ENCODE measurements at regions of chr7 and their contacts with region 1.

Region 1: GRCh38 chr7:155763691-155764437 is 48.4 kb downstream of the SHH start:
- DNase-seq: peak; percentile 91
- H3K4me3 Mint-ChIP-seq: peak overlapping the region; percentile 83
- H3K27ac Mint-ChIP-seq: peak overlapping the region; percentile 99
- H3K4me1 Mint-ChIP-seq: peaks cover 67% of the 10 kb centered on the region
- H3K27me3 Mint-ChIP-seq: no peaks in the 10 kb centered on the region

Region 2: DNA sequence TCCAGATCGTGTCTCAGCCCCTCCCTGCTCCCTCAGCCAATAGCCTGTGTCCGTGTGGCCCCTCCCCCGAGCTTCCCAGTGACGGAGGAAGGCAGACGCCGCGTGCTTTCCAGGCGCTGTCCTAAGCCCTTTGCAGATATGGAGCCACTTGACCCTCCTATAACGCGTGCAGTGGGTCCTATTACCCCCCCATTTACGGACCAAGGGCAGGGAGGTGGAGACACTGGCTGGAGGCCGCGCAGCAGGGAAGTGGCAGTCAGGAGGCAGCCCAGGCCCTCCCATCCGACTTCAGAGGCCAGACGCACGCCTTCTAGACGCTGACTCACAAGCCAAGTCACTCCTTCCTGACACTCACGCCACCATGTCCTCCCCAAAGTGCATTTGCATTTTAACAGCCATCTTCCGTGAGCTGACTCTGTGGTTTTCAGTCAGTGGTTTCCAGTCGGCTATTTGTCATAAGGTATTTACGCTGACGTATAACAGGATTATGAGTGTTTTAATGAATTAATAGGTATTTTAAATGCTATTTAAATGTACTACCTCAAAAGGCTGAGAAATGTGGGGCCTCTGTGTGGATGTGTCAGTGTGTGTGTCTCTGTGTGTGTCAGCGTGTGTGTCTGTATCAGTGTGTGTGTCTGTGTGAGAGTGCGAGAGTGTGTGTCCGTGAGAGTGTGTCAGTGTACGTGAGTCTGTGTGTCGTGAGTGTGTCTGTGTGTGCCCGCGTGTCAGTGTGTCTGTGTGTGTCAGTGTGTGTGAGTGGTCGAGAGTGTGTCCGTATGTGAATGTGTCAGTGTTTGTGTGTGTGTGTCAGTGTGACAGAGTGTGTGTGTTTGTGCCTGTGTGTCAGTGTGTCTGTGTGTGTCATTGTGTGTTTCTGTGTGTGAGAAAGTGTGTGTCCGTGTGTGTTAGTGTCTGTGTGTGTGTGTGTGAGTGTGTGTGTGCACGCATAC is 558.2 kb before region 1 on chr7:
- intact Hi-C with region 1: loop called (anchors 5 kb)
- DNase-seq: peak; percentile 96
- H3K4me3 Mint-ChIP-seq: peak overlapping the region; percentile 85
- H3K27ac Mint-ChIP-seq: peak overlapping the region; percentile 96
- H3K4me1 Mint-ChIP-seq: peaks cover 34% of the 10 kb centered on the region
- H3K27me3 Mint-ChIP-seq: no peaks in the 10 kb centered on the region

Region 3: GRCh38 chr7:155298834-155299534 is 464.9 kb before region 1 on chr7:
- intact Hi-C with region 1: loop called (anchors 5 kb)
- DNase-seq: peak; percentile 99
- H3K4me3 Mint-ChIP-seq: peak overlapping the region; percentile 94
- H3K27ac Mint-ChIP-seq: peak overlapping the region; percentile 97
- H3K4me1 Mint-ChIP-seq: peaks cover 42% of the 10 kb centered on the region
- H3K27me3 Mint-ChIP-seq: no peaks in the 10 kb centered on the region

Region 4: DNA sequence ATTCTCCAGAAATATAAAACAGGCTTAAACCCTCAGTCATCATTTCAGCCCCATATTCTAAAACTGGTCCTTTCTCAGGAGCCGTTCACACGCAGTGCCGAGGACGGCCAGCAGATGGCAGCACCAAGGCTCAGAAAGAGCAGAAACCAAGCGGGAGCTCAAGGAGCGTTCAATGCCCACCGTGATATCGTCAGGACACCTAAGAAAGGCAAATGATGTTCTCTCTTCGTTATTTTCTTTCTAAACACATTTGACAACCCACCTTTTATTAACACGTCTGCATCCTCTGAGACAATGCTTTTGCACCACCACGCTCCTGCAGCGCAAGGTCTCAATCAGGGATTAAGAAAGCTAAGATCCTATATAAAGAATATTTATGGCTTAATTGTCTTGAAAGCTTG is 165.1 kb before region 1 on chr7:
- intact Hi-C with region 1: loop called (anchors 1 kb)
- DNase-seq: peak; percentile 96
- H3K4me3 Mint-ChIP-seq: no peak overlapping the region
- H3K27ac Mint-ChIP-seq: no peak overlapping the region
- H3K4me1 Mint-ChIP-seq: peaks cover 12% of the 10 kb centered on the region
- H3K27me3 Mint-ChIP-seq: peaks cover 38% of the 10 kb centered on the region

Region 5: GRCh38 chr7:155653803-155654202 is 110.1 kb before region 1 on chr7:
- intact Hi-C with region 1: no loop called
- DNase-seq: no peak
- H3K4me3 Mint-ChIP-seq: no peak overlapping the region
- H3K27ac Mint-ChIP-seq: no peak overlapping the region
- H3K4me1 Mint-ChIP-seq: peaks cover 42% of the 10 kb centered on the region
- H3K27me3 Mint-ChIP-seq: no peaks in the 10 kb centered on the region

Region 6: GRCh38 chr7:155738652-155739537 is 25.0 kb before region 1 on chr7:
- intact Hi-C with region 1: loop called (anchors 1 kb)
- DNase-seq: peak; percentile 89
- H3K4me3 Mint-ChIP-seq: peak overlapping the region; percentile 52
- H3K27ac Mint-ChIP-seq: peak overlapping the region; percentile 75
- H3K4me1 Mint-ChIP-seq: peaks cover 40% of the 10 kb centered on the region
- H3K27me3 Mint-ChIP-seq: no peaks in the 10 kb centered on the region

Region 7: DNA sequence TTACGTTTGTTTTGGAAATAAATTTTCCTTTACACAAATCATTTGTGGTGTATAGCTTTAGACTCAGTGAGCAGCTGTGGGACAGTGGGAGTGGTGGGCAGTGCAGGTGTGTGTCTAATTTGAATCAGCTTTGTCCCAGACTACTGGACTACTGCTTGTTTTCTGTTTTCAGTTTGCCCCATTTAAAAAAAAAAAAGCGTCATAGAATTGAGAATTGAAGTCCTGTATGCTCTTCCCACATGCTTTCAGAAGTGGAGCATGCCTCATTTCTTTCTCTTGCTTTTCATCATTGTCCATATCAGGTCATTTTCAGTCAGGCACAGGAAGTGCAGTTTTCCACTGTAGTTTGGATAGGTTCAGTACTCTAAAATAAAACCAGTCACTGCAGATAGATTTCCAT is 17.7 kb before region 1 on chr7:
- intact Hi-C with region 1: loop called (anchors 1 kb)
- DNase-seq: no peak
- H3K4me3 Mint-ChIP-seq: peak overlapping the region; percentile 11
- H3K27ac Mint-ChIP-seq: peak overlapping the region; percentile 77
- H3K4me1 Mint-ChIP-seq: peaks cover 52% of the 10 kb centered on the region
- H3K27me3 Mint-ChIP-seq: no peaks in the 10 kb centered on the region

Region 8: DNA sequence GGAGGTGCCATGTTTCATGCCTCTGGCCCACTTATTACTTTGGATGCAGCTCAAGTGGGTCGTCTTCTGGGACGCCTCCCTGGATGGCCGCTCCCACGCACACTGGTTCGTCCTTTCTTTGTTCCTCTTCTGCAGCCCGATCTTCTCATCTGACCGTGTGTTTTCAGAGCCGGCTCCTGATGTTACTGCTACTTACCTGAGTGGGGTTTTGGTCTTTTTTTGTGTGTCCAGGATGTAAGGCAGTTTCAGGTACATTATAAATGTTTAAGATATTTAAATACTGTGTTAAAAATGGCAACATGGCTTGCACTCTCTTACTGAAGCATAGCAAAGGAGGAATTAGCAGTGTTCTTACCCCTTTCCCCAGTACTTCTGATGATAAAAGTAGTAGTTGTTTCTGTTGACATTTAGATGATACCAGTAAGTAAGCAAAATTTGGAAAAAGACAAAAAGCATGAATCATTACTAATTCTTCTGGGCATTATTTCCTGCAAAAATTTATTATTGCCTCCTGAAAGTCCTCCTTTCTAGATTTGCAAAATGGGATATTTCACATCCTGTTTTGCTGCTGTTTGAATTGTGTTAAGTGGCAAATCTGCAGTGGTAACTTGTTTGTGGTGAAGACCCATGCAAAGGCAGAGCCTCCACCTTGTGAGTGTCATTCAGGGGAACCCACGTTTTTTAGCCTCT is 11.0 kb before region 1 on chr7:
- intact Hi-C with region 1: loop called (anchors 1 kb)
- DNase-seq: no peak
- H3K4me3 Mint-ChIP-seq: no peak overlapping the region
- H3K27ac Mint-ChIP-seq: peak overlapping the region; percentile 12
- H3K4me1 Mint-ChIP-seq: peaks cover 62% of the 10 kb centered on the region
- H3K27me3 Mint-ChIP-seq: no peaks in the 10 kb centered on the region

Measured in activated CD4-positive, alpha-beta T cell treated with anti-CD3 and anti-CD28 coated beads, Interleukin-2, amount 10 ng/mL, durations not matched to agents 24 days and 14 days (primary cell).